Heart right ventricle (tissue), 16 donors: ENCODE measurements at regions of chr17 and their contacts with region 1.

Region 1: GRCh38 chr17:21126645-21127510 is at the start of gene DHRS7B:
- DNase-seq: peak; percentile 96 to 97
- ATAC-seq: peak; percentile 96 to 98 (median 98)
- H3K4me3 ChIP-seq: peak within 1 kb of the TSS; percentile 61 to 96 (median 91)
- H3K27ac ChIP-seq: peak within 1 kb of the TSS; percentile 82 to 96 (median 94)
- H3K4me1 ChIP-seq: peaks cover 4 to 63% (median 39%) of the 10 kb centered on the region in 9 donors
- H3K27me3 ChIP-seq: no peaks in the 10 kb centered on the region
- CTCF ChIP-seq: peak in 1 of 9 donors; percentile 13
- total RNA-seq, gene DHRS7B: 17.1 to 48.0 (median 26.0) TPM

Region 2: GRCh38 chr17:21161498-21162393 is 34.9 kb after region 1 on chr17:
- intact Hi-C with region 1: loop called in 1 of 10 experiments (anchors 2 kb)
- DNase-seq: no peak
- ATAC-seq: peak in 5 of 8 donors; percentile 25 to 63 (median 55)
- H3K4me3 ChIP-seq: no peak overlapping the region
- H3K27ac ChIP-seq: peak overlapping the region in 9 of 10 donors; percentile 31 to 74 (median 64)
- H3K4me1 ChIP-seq: peaks cover 5 to 48% (median 30%) of the 10 kb centered on the region in 9 donors
- H3K27me3 ChIP-seq: no peaks in the 10 kb centered on the region
- CTCF ChIP-seq: no peak

Region 3: DNA sequence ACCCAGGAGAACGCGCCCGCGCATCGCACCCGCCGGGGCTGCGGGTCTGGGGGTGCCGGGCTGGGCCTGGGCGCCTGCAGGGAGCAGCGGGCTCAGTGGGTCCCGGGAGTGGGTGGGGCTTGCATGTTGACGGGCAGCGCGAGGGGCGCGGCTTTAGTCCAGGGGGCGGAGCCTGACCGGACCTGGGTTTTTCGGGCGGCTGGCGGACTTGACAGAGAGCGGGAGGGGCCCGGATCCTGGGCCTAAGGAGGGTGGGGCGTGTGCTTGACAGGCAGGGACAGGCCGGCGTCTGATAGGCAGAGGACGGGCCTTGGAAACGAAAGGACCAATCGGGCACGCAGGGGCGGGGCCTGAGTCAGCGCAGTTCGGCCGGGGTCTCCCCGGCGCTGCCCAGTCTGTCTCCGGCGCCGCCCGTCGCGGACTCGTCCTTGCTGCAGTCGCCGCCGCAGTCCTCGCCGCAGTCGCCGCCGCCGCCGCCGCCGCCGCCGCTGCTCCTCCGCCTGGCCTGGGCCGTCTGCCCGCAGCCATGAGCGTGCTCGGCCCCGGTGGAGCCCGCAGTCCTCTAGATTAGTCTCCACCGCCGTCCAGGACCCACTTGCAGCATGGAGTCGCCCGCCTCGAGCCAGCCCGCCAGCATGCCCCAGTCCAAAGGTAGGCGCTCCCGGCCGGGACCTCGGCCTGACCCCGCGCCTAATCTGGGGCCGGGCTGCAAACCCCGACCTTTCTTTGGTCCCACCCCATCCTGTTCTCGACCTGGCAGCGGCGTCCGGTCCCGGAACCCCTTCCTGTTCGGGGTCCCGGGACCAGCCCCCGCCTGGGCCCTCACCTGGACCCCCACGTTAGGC is 157.7 kb after region 1 on chr17 and contains the start of gene MAP2K3:
- intact Hi-C with region 1: loop called (anchors 2 to 10 kb)
- DNase-seq: peak; percentile 99
- ATAC-seq: peak; percentile 79 to 91 (median 86)
- H3K4me3 ChIP-seq: peak within 1 kb of the TSS; percentile 67 to 99 (median 97)
- H3K27ac ChIP-seq: peak within 1 kb of the TSS; percentile 83 to 99 (median 96)
- H3K4me1 ChIP-seq: peaks cover 35 to 71% (median 49%) of the 10 kb centered on the region in 9 donors
- H3K27me3 ChIP-seq: no peaks in the 10 kb centered on the region
- CTCF ChIP-seq: peak in 1 of 9 donors; percentile 0
- total RNA-seq, gene MAP2K3: 28.9 to 71.6 (median 60.4) TPM

Region 4: DNA sequence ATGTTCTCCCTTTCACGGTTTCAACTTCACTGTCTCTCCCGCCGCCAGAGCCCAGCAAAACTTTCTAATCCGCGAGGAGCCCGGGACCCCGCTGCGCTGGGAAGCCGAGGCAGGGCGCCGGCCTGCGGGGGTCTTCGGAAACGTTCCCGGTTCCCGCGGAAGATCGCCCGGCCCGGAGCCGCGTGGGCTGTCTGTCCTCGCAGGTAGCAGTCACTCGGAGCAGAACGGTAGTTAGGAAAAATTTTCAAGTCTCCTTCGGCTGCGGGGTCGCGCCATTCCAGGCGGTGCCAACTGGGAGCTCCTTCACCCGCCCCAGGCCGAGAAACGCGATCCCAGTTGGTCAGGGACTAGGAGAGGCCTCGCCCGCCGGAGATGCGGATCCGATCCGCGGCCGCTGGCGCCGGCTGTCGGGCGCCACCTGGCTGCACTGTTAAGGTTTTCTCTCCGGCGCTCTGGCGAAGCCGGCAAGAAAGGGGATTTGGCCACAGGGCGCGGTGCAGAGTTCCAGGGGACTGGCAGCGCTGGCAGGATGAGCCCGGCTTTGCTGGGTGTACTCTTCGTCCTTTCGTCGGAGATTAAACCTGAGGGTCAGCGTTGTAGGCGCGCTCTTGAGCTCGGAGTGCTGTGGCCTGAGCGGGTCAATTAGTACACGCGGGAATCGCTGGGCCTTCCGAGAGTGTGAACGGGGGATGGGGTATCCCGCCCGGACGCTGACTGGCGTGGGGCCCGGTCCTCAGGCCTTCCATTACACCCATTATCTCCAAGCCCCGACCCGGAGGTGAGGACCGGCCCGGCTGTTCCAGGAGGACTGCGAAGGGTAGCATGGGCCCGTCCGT is 384.7 kb after region 1 on chr17:
- intact Hi-C with region 1: loop called in 4 of 10 experiments (anchors 5 kb)
- DNase-seq: peak; percentile 82 to 86
- ATAC-seq: peak; percentile 93 to 98 (median 96)
- H3K4me3 ChIP-seq: peak overlapping the region; percentile 38 to 69 (median 62)
- H3K27ac ChIP-seq: peak overlapping the region in 9 of 10 donors; percentile 21 to 81 (median 60)
- H3K4me1 ChIP-seq: peaks cover 0 to 20% (median 4%) of the 10 kb centered on the region in 9 donors
- H3K27me3 ChIP-seq: peaks cover 0 to 21% (median 0%) of the 10 kb centered on the region in 7 donors
- CTCF ChIP-seq: peak; percentile 71 to 94 (median 85)